PC-9 (cell line): ENCODE measurements at regions of chr11 and their contacts with region 1.

Region 1: GRCh38 chr11:46090375-46090774 is 30.9 kb downstream of the PHF21A start:
- DNase-seq: no peak
- H3K4me3 ChIP-seq: no peak overlapping the region
- H3K27ac ChIP-seq: no peak overlapping the region
- H3K4me1 ChIP-seq: no peaks in the 10 kb centered on the region
- H3K27me3 ChIP-seq: no peaks in the 10 kb centered on the region
- CTCF ChIP-seq: no peak

Region 2: GRCh38 chr11:46057489-46057888 is 32.9 kb before region 1 on chr11:
- CTCF ChIA-PET with region 1: interaction called, 4 read pairs
- POLR2A ChIA-PET with region 1: no interaction called
- intact Hi-C with region 1: loop called (anchors 2 kb)
- DNase-seq: no peak
- H3K4me3 ChIP-seq: no peak overlapping the region
- H3K27ac ChIP-seq: no peak overlapping the region
- H3K4me1 ChIP-seq: no peaks in the 10 kb centered on the region
- H3K27me3 ChIP-seq: no peaks in the 10 kb centered on the region
- CTCF ChIP-seq: no peak

Region 3: DNA sequence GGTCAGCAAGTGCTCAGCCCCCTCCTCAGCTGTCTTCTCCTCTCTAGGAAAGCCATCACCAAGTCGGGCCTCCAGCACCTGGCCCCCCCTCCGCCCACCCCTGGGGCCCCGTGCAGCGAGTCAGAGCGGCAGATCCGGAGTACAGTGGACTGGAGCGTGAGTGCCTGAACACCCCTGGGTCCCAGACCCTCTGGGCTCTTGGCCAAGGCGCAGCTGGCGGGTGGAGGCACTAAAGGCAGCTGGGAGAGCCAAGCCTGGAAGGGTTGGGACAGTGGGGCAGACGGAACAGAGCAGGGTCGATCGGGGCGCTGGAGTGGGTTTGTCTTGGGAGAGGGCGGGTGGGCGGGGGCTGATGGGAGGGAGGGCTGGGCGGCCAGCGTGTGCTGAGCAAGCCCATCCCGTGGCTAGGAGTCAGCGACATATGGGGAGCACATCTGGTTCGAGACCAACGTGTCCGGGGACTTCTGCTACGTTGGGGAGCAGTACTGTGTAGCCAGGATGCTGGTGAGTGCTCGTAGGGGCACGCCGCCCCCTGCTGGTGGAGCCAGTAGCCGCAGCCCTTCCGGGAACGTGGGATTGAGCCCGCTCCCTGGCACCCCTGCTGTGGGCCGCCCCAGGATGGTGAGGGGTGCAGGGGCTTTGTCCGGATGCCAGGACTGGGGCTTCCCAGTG is 277.0 kb after region 1 on chr11:
- CTCF ChIA-PET with region 1: no interaction called
- POLR2A ChIA-PET with region 1: no interaction called
- intact Hi-C with region 1: no loop called
- DNase-seq: peak in 1 of 2 experiments; percentile 67
- H3K4me3 ChIP-seq: no peak overlapping the region
- H3K27ac ChIP-seq: no peak overlapping the region
- H3K4me1 ChIP-seq: peaks cover 20% of the 10 kb centered on the region
- H3K27me3 ChIP-seq: no peaks in the 10 kb centered on the region
- CTCF ChIP-seq: peak; percentile 88